ENCODE measurements at regions of chr4 and their contacts with region 1.

Region 1: DNA sequence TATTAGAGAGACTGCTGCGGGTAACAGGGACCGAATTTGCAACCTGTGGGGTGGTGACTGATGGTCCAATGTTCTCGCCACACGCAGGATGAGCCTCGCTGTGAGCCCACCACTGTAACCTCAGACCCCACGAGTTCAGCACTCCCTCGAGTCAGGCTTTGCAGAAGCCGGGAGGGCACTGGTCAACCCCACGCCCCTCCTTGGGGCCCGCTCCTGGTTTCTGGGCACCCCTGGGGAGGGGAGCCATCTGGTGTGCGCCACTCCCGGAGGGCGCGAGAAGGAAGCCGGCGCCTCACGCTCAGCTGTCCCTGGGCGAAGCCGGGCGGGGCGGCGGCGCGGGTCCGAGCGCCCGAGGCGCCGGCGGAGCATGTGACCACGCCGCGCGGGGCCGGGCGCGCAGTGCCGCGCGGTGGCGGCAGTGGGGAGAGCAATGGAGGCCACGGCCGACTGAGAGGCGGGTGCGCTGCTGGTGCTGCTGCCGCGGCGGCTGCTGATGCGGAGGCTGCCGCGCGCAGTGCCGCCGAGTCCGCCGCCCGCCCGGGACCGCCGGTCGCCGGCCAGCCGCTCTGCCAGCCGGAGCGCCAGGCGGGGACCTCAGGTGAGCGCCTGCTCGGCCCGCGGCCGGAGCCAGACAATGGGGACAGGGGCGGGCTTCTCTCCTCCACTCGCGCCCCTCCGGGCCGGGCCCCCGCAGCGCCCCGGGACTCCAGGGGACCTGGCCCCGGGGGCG is 100.1 kb downstream of the CEP135 start:
- DNase-seq: peak; percentile 51
- H3K4me3 Mint-ChIP-seq: peak overlapping the region; percentile 68
- H3K27ac Mint-ChIP-seq: no peak overlapping the region
- H3K4me1 Mint-ChIP-seq: peaks cover 8% of the 10 kb centered on the region
- H3K27me3 Mint-ChIP-seq: peaks cover 59% of the 10 kb centered on the region

Region 2: DNA sequence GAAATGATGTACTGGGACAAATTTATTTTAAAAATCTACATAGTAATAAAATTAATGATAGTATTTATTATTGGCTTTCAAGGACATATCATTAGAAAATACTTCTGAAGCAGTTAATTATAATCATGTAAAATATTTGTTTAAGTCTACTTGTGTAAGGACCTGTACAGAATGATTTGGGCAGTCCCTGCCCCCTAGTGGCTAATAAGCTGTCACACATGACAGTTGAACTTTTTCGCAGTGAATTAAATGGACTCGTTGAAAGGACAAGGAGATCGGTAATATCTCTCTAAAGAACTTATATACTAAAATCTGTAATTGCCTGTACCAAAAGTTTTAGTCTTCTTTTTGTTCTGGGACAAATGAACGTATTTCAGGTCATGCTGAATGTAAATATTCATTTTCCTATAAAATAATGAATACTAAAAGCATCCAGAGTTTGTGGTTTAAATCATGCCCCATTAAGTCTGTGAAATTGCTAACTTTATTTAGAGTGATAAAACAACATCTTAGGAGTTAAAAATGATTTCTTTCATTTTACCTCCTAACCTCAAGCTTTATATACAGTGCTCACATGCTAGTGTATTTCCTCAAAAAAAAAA is 181.8 kb before region 1 on chr4:
- intact Hi-C with region 1: loop called (anchors 10 kb)
- DNase-seq: no peak
- H3K4me3 Mint-ChIP-seq: no peak overlapping the region
- H3K27ac Mint-ChIP-seq: no peak overlapping the region
- H3K4me1 Mint-ChIP-seq: peaks cover 23% of the 10 kb centered on the region
- H3K27me3 Mint-ChIP-seq: no peaks in the 10 kb centered on the region

Region 3: DNA sequence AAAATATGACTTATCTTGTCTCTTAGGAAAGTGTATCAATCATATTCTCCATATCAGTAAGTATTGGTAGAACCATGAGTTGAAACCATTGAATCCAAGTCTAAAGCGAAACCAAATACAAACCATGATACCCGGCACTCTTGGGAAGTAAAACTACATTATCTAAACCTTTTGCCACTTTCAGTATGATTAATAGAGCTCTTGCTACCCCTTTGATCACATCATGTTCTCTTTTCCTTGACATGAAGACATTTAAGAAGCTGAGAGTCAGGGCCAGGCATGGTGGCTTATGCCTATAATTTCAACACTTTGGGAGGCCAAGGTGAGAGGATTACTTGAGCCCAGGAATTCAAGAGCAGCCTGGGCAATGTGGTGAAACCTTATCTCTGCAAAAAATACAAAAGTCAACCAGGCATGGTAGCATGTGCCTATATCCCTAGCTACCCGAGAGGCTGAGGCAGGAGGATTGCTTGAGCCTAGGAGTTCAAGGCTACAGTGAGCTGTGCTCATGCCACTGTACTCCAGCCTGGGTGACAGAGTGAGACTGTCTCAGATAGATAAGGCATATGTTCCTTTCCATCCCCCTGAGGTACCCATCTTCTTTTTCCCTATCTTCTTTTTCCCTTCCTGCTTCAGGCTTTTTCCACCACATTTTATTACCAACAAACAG is 54.7 kb before region 1 on chr4:
- intact Hi-C with region 1: loop called (anchors 2 kb)
- DNase-seq: no peak
- H3K4me3 Mint-ChIP-seq: no peak overlapping the region
- H3K27ac Mint-ChIP-seq: peak overlapping the region; percentile 37
- H3K4me1 Mint-ChIP-seq: peaks cover 26% of the 10 kb centered on the region
- H3K27me3 Mint-ChIP-seq: no peaks in the 10 kb centered on the region

Region 4: GRCh38 chr4:56200275-56200674 is 151.4 kb after region 1 on chr4:
- intact Hi-C with region 1: no loop called
- DNase-seq: no peak
- H3K4me3 Mint-ChIP-seq: no peak overlapping the region
- H3K27ac Mint-ChIP-seq: no peak overlapping the region
- H3K4me1 Mint-ChIP-seq: no peaks in the 10 kb centered on the region
- H3K27me3 Mint-ChIP-seq: peaks cover 8% of the 10 kb centered on the region

Region 5: DNA sequence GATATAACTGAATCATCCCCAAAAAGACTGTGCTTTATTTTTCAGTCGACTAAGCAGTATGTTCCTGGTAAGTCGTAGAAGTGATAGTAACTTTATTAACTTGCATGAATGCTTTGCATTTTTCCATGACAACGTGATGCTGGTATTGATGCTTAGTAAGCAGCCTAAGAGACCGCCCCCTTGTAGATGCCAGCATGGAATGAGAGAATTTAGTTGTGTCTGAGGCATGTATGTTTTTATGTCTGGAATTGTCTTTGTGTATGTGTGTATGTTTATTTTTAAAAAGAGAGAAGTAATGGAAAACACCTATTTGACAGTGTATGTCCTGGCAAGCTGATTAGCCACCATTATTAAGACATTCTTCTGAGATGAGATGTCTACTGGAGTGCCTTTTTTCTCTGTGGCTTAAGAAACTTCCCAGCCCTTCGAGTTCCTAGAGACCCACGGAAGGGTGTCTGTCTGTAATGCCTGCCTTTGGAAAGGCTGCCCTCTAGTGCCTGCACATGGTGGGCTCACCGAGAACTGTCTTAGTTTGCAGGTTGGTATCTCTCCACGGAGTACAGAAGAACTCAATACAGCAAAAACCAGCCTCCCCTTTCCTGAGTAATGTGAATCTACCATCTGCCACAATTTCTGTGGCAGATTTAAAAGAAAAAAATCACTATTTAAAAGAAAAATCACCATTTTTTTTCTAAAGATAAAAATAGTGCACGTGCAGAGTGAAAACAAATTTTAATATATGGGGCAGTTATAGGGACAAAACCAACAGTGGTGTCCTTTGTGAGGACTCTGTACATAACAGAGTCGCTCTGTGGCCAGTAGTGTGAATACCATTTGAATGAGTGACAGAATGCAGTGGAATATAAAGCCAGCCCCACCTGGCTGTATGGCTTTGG is 252.6 kb after region 1 on chr4:
- intact Hi-C with region 1: loop called (anchors 2 kb)
- DNase-seq: peak; percentile 55
- H3K4me3 Mint-ChIP-seq: peak overlapping the region; percentile 15
- H3K27ac Mint-ChIP-seq: no peak overlapping the region
- H3K4me1 Mint-ChIP-seq: peaks cover 12% of the 10 kb centered on the region
- H3K27me3 Mint-ChIP-seq: peaks cover 15% of the 10 kb centered on the region

Measured in activated T-helper 2 cell treated with anti-CD3 and anti-CD28 coated beads, Interferon-gamma antibody, Interleukin-2, Interleukin-4, amounts not matched to agents 10 μg/mL and 5 μg/mL and 100 μg/mL, durations not matched to agents 14 hours and 24 hours and 36 hours (primary cell).